Prostate gland (tissue), 2 donors: ENCODE measurements at regions of chr19 and their contacts with region 1.

Region 1: GRCh38 chr19:49850473-49851342 is at the start of gene PTOV1:
- DNase-seq: peak; percentile 90
- H3K4me3 ChIP-seq: peak within 1 kb of the TSS; percentile 62 to 91
- H3K27ac ChIP-seq: peak within 1 kb of the TSS; percentile 99 to 100
- H3K4me1 ChIP-seq: no peaks in the 10 kb centered on the region
- H3K27me3 ChIP-seq: no peaks in the 10 kb centered on the region
- CTCF ChIP-seq: no peak
- POLR2A ChIP-seq: peak; percentile 72
- total RNA-seq, gene PTOV1: 179 to 252 TPM

Region 2: DNA sequence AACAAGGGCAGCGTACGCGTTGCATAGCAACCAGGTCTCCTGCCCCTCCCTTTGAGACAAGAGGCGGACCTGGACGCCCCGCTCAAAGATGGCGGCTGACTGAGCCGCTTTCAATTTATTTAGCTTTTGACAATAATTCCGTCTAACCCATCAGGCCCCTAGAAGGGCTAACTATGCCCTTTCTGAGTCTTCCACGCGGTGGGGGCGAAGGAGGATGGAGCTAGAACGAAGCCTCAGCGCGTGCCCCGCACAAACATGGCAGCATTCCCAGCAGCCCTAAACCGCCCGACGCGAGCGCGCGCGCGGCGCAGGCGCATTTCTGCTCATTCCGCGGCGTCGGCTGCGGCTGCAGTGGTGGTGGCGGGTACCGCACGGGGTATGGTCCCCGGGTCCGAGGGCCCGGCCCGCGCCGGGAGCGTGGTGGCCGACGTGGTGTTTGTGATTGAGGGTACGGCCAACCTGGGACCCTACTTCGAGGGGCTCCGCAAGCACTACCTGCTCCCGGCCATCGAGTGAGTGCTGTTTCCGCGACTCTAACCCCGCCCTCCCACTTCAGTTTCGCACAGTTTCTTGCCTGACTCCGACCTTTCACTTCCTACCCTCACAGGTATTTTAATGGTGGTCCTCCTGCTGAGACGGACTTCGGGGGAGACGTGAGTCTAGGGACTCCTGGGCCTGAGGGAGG is 32.6 kb before region 1 on chr19 and contains the start of gene MED25:
- intact Hi-C with region 1: loop called (anchors 5 kb)
- DNase-seq: peak; percentile 77
- H3K4me3 ChIP-seq: peak within 1 kb of the TSS; percentile 67 to 79
- H3K27ac ChIP-seq: peak within 1 kb of the TSS; percentile 91 to 93
- H3K4me1 ChIP-seq: peaks cover 3% of the 10 kb centered on the region
- H3K27me3 ChIP-seq: no peaks in the 10 kb centered on the region
- CTCF ChIP-seq: peak in 3 of 4 experiments; percentile 14 to 76 (median 59)
- POLR2A ChIP-seq: peak; percentile 87
- total RNA-seq, gene MED25: 38.4 to 173 TPM